ENCODE measurements at regions of chr20 and their contacts with region 1.

Region 1: DNA sequence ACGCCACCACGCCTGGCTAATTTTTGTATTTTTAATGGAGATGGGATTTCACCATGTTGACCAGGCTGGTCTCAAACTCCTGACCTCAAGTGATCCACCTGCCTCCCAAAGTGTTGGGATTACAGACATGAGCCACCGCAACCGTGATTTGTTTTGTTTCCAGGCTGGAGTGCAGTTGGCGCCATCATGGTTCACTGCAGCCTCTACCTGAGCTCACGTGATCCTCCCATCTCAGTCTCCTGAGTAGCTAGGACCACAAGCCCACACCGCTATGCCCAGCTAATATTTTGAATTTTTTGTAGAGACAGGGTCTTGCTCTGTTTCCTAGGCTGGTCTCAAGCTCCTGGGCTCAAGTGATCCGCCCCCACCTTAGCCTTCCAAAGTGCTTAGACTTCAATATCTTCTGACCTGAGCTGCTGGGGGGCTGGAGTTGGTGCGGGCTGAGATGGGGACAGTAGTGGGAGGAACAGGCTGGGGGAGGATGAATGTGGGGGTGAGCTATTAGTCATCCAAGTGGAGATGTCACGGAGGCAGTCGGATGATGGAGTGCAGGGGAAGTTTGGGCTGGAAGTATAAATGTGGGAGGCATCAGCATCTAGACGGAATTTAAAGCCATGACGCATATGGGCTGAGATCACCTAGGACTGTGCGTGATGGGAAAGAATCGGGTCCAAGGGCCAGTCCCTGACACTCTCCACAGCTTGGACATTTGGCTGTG is 23.1 kb upstream of the ZMYND8 start:
- DNase-seq: no peak
- ATAC-seq: no peak
- H3K4me3 ChIP-seq: no peak overlapping the region
- H3K27ac ChIP-seq: no peak overlapping the region
- H3K4me1 ChIP-seq: peaks cover 9 to 11% of the 10 kb centered on the region in 2 experiments
- H3K27me3 ChIP-seq: no peaks in the 10 kb centered on the region
- CTCF ChIP-seq: no peak
- POLR2A ChIP-seq: no peak
- RAD21 ChIP-seq: no peak

Region 2: GRCh38 chr20:46746956-46747526 is 632.6 kb before region 1 on chr20:
- CTCF ChIA-PET with region 1: interaction called, 3 read pairs
- POLR2A ChIA-PET with region 1: no interaction called
- RAD21 ChIA-PET with region 1: no interaction called
- intact Hi-C with region 1: loop called (anchors 5 kb)
- DNase-seq: peak; percentile 28
- ATAC-seq: peak; percentile 71
- H3K4me3 ChIP-seq: peak overlapping the region in 1 of 2 experiments; percentile 17; a peak in 2 of 4 replicates
- H3K27ac ChIP-seq: no peak overlapping the region
- H3K4me1 ChIP-seq: peaks cover 6 to 27% of the 10 kb centered on the region in 2 experiments; a peak in 3 of 4 replicates
- H3K27me3 ChIP-seq: no peaks in the 10 kb centered on the region
- CTCF ChIP-seq: no peak
- POLR2A ChIP-seq: no peak
- RAD21 ChIP-seq: no peak

Region 3: DNA sequence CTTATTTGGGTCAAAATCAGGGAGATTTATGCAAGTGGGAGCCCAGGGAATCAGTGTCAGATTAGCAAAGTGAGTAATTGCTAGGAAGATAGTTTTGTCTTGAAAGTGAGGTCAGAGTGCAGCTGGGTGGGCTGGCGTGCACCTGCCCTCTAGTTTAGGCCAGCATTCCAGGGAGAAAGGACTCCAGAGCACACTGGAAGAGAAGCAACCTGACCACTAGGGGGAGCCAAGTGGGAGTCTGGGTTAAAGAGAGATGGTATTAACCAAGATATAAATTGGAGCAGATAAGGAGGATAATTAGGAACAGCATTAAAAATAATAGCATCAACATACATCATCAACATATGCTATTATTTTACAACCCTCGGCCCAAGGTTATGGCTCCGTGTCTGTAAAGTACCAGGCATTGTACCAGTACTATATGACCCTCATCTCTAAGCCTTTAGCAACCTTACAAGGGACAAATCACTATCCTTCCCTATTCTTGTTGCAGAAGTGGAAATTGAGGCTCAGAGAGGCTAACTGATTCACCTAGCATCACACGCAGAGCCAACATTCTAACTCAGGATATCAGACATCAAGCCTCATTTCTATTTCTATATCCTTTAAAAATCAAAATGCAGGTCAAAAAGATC is 612.3 kb before region 1 on chr20:
- CTCF ChIA-PET with region 1: interaction called, 3 read pairs
- POLR2A ChIA-PET with region 1: no interaction called
- RAD21 ChIA-PET with region 1: interaction called in 1 of 2 experiments, 6 read pairs
- intact Hi-C with region 1: loop called (anchors 5 kb)
- DNase-seq: peak; percentile 46
- ATAC-seq: peak; percentile 94
- H3K4me3 ChIP-seq: no peak overlapping the region
- H3K27ac ChIP-seq: no peak overlapping the region
- H3K4me1 ChIP-seq: peaks cover 0 to 6% of the 10 kb centered on the region in 2 experiments; a peak in 2 of 4 replicates
- H3K27me3 ChIP-seq: no peaks in the 10 kb centered on the region
- CTCF ChIP-seq: peak; percentile 53 to 94 (median 86); a peak in 5 of 6 replicates
- POLR2A ChIP-seq: no peak
- RAD21 ChIP-seq: peak; percentile 65

Region 4: DNA sequence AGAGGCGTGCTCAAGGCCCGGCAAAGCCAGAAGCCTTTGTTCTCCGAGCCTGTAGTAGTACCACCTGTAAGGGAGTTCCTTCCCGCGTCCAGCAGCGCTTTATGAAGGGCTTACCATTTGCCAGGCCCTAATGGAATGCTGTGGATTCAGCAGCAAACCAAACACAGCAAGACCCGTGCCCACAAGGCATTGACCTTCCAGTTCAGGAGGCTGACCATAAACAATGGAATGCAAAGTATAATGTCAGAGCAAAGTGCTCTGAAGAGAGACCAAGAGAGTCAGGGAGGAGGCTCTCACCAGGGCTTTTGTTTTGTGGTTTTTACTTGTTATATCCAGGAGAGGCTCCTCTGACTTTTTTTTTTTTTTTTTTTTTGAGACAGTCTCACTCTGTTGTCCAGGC is 232.9 kb before region 1 on chr20:
- CTCF ChIA-PET with region 1: no interaction called
- POLR2A ChIA-PET with region 1: no interaction called
- RAD21 ChIA-PET with region 1: no interaction called
- intact Hi-C with region 1: no loop called
- DNase-seq: no peak
- ATAC-seq: no peak
- H3K4me3 ChIP-seq: no peak overlapping the region
- H3K27ac ChIP-seq: no peak overlapping the region
- H3K4me1 ChIP-seq: peaks cover 2 to 5% of the 10 kb centered on the region in 2 experiments; a peak in 2 of 4 replicates
- H3K27me3 ChIP-seq: no peaks in the 10 kb centered on the region
- CTCF ChIP-seq: no peak
- POLR2A ChIP-seq: no peak
- RAD21 ChIP-seq: no peak

Region 5: DNA sequence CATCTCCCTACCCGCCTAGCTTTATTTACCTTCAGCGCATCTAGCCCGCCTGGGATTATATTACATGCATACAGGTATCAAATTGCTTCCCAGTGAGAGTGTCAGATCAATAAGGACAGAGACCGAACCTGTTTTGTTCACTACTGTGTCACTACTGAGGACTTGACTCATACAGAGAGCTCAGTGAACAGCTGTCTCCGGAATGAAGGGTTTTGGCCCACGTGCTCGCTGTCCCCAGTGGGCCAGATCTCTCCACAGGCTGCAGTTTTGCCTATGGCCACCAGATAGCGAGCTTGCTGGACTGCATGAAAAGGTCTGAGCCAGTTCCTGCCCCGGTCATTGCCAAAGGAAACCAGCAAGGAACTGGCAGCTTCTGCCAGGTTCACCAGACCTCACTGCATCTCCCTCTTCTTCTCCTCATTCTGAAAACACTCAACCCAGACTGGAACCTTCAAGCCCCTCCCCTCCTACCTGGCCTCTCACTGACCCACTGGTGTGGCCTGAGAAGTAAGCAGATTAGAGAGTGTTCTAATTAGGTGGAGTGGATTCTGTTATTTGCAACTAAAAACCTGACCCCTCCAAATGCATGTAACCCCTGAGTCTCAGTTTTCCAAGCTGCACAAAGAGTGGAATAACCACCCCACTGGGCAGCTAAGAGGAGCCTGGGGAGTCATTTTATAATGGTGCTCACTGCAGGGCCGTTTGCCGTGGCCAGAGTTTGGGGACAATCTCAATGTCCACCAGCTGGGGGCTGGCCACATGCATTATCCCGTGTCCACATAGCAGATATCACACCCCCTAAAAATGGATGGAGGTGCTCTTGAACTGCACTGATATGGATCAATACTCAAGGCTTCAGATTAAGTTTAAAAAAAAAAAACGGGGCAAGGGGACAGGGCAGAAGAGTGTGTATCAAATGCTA is 173.8 kb before region 1 on chr20:
- CTCF ChIA-PET with region 1: interaction called, 75 read pairs
- POLR2A ChIA-PET with region 1: interaction called, 3 read pairs
- RAD21 ChIA-PET with region 1: interaction called, 12 to 17 read pairs
- intact Hi-C with region 1: loop called (anchors 2 kb)
- DNase-seq: peak; percentile 77
- ATAC-seq: peak; percentile 61
- H3K4me3 ChIP-seq: peak overlapping the region in 1 of 2 experiments; percentile 15; a peak in 1 of 4 replicates
- H3K27ac ChIP-seq: peak overlapping the region; percentile 74
- H3K4me1 ChIP-seq: peaks cover 57 to 66% of the 10 kb centered on the region in 2 experiments
- H3K27me3 ChIP-seq: no peaks in the 10 kb centered on the region
- CTCF ChIP-seq: peak; percentile 56 to 85 (median 81); a peak in 5 of 6 replicates
- POLR2A ChIP-seq: no peak
- RAD21 ChIP-seq: peak; percentile 70

Region 6: DNA sequence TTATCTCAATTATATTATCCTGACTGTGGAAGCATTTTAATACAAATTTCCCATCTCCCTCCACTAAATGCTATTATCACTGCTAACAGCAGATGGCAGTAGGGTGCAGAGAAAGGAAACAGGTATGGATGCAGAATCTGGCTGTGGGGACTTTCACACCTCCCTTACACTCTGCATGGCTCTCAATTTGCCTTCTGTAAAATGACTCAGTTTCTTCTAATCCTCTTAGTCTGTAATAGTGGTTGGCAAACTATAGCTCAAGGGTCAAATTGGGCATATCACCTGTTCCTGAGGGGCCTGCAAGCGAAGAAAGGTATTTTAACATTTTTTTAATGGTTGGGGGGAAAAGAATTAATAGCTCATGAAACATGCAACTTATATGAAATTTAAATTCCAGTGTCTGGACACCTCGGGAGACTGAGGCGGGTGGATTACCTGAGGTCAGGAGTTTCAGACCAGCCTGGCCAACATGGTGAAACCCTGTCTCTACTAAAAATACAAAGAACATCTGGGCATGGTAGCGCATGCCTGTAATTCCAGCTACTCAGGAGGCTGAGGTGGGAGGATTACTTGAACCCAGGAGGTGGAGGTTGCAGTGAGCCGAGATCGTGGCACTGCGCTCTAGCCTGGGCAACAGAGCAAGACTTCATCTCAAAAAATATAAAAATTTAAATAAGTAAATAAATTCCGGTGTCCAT is 106.5 kb before region 1 on chr20:
- CTCF ChIA-PET with region 1: interaction called, 225 read pairs
- POLR2A ChIA-PET with region 1: interaction called, 35 read pairs
- RAD21 ChIA-PET with region 1: interaction called, 27 to 55 read pairs
- intact Hi-C with region 1: loop called (anchors 1 kb)
- DNase-seq: peak; percentile 52
- ATAC-seq: peak; percentile 67
- H3K4me3 ChIP-seq: no peak overlapping the region
- H3K27ac ChIP-seq: no peak overlapping the region
- H3K4me1 ChIP-seq: peaks cover 36 to 44% of the 10 kb centered on the region in 2 experiments
- H3K27me3 ChIP-seq: no peaks in the 10 kb centered on the region
- CTCF ChIP-seq: peak; percentile 81 to 95 (median 93)
- POLR2A ChIP-seq: no peak
- RAD21 ChIP-seq: peak; percentile 96

Region 7: DNA sequence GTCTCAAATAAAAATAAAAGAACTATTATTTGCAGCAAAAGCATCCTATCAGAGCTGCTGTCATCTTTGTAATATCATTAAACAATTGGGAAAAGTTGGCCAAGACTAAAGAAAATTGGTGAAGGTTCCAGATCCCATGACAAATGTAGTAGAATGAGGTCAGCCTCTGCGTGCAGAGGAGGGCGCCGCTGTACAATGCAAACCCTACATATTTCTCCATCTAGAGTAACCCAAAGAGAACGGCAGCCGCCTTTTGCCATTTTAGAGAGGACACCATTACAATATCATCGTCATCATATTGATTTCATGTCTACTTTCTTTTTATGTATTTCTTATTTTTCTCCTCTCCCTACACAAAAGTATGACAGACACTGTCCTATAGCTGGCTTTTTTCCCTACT is 82.6 kb before region 1 on chr20:
- CTCF ChIA-PET with region 1: interaction called, 8 read pairs
- POLR2A ChIA-PET with region 1: no interaction called
- RAD21 ChIA-PET with region 1: interaction called in 1 of 2 experiments, 7 read pairs
- intact Hi-C with region 1: loop called (anchors 1 kb)
- DNase-seq: no peak
- ATAC-seq: peak; percentile 72; the same call in 1 of the 2 replicates
- H3K4me3 ChIP-seq: no peak overlapping the region
- H3K27ac ChIP-seq: no peak overlapping the region
- H3K4me1 ChIP-seq: no peaks in the 10 kb centered on the region
- H3K27me3 ChIP-seq: no peaks in the 10 kb centered on the region
- CTCF ChIP-seq: peak; percentile 16 to 69 (median 29); a peak in 3 of 6 replicates
- POLR2A ChIP-seq: no peak
- RAD21 ChIP-seq: peak; percentile 73

Region 8: GRCh38 chr20:47356526-47357295 is 22.9 kb before region 1 on chr20 and contains the start of gene ZMYND8:
- CTCF ChIA-PET with region 1: interaction called, 13 read pairs
- POLR2A ChIA-PET with region 1: interaction called, 5 read pairs
- RAD21 ChIA-PET with region 1: interaction called, 3 to 4 read pairs
- intact Hi-C with region 1: no loop called
- DNase-seq: peak; percentile 77
- ATAC-seq: peak; percentile 61
- H3K4me3 ChIP-seq: peak within 1 kb of the TSS; percentile 53 to 60
- H3K27ac ChIP-seq: peak within 1 kb of the TSS; percentile 98
- H3K4me1 ChIP-seq: peaks cover 69 to 80% of the 10 kb centered on the region in 2 experiments
- H3K27me3 ChIP-seq: no peaks in the 10 kb centered on the region
- CTCF ChIP-seq: no peak
- POLR2A ChIP-seq: peak; percentile 74
- RAD21 ChIP-seq: no peak
- total RNA-seq, gene ZMYND8: 29.0 TPM